ENCODE measurements at regions of chr2 and their contacts with region 1.

Region 1: DNA sequence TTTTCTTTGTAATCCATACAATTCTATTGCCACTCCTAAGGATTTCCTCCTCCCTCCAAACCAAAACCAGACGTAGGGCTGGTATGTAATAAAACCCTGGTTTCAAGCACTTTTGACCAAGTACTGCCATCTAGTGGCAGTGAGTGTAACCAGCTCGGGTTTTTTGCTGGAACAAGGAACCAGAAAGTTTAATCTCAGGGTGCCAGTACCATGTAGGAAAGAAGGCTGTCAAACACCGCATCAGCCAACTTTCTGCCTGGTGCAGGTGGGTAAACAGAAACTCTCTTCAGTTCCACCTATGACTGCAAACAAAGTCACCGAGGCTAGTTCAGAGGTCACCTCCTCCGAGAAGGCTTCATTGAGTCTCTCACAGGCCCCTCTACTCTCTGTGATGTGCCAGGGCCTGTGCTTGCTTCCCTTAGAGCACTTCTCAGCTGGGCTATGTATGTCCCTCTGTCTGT is 10.2 kb upstream of the THNSL2 start:
- DNase-seq: no peak
- H3K4me3 ChIP-seq: no peak overlapping the region
- H3K27ac ChIP-seq: no peak overlapping the region
- H3K4me1 ChIP-seq: peaks cover 0 to 9% (median 5%) of the 10 kb centered on the region in 3 donors
- H3K27me3 ChIP-seq: no peaks in the 10 kb centered on the region
- CTCF ChIP-seq: peak; percentile 69 to 85 (median 80)
- POLR2A ChIP-seq: no peak

Region 2: DNA sequence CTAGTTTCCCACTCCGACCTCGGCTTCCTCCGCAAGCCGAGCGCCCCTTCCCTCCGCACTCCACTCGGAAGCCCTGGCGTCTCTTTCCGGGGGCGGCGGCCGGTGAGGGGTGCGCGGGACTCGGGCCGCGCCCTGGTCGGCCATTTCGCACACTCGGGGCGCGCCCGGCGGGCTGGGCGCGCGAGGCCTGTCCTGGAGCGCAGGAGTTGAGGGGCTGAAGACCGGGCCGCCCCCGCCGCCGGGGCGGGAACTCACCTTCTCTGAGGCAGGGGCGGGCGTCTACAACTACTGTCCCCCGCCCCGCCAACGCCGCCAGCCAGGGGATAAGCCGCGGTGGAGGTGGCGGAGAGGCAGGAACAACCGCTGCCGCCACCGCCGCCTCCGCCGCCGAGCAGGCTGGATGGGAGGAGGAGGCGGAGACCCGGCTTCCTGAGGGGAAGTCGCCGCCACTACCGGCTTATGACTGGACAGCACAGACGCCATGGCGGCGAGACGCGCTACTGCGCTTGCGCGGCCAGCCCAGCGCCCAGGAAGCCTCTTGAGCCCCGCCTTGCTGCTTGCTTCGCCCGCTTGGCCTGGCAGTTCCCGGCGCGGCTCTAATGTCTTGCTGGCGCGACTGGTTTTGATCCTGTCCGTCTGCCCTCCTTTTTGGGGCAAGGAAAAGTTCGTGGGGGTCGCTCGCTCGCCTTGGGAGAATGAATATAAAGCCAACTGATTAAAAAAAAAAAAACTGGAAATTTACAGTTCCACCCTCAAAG is 104.4 kb before region 1 on chr2 and contains the start of gene KRCC1:
- intact Hi-C with region 1: loop called (anchors 5 kb)
- DNase-seq: peak; percentile 73
- H3K4me3 ChIP-seq: peak within 1 kb of the TSS; percentile 76 to 96 (median 86)
- H3K27ac ChIP-seq: peak within 1 kb of the TSS; percentile 98 to 100 (median 98)
- H3K4me1 ChIP-seq: peaks cover 16 to 44% (median 20%) of the 10 kb centered on the region in 3 donors
- H3K27me3 ChIP-seq: no peaks in the 10 kb centered on the region
- CTCF ChIP-seq: peak in 3 of 6 experiments; percentile 17 to 38 (median 31)
- POLR2A ChIP-seq: peak in 3 of 4 donors; percentile 50 to 97 (median 94)
- total RNA-seq, gene KRCC1: 11.7 to 28.4 (median 20.1) TPM